ENCODE measurements at regions of chr1 and their contacts with region 1.

Region 1: DNA sequence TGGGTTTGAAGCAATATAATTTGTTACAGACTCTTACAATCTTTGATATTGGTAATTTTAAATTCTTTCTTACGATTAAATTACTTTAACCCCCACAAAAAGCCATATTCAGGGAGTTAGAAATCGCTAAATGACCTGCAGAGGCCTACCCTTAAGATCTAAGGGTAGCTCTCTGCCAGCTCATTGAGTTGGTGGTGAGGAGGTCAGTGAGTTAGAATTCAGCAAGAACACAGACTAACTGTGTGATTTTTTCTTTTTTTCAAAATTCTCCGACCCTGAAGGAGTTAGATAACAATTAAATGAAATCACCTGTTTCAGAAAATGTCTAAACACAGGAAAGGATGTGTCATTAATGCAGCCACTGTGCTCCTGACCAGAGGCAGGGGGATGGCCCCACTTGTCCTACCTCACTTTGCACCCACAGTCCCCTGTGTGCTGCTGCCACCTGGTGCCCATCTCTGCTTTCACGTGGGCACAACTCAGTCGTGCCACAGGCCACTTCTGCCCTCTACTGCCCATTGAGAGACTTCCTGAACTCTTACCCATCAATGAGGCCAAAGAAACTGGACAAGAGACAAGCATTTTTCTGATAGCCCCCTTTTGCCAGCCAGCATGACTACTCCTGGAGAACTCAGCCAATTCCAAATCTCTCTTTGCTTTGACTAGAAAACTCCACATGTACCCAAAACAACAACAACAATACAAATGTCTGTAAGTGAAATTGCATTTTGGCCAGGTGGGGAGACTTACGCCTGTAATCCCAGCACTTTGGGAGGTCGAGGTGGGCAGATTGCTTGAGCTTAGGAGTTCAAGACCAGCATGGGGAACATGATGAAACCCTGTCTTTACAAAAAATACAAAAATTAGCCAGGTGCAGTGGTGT is 8.4 kb downstream of the CFAP45 start:
- DNase-seq: peak; percentile 97
- ATAC-seq: peak; percentile 74
- H3K4me3 ChIP-seq: no peak overlapping the region
- H3K27ac ChIP-seq: peak overlapping the region; percentile 19; the same call in 1 of the 2 replicates
- H3K4me1 ChIP-seq: peaks cover 27% of the 10 kb centered on the region
- H3K27me3 ChIP-seq: no peaks in the 10 kb centered on the region
- CTCF ChIP-seq: peak; percentile 100

Region 2: DNA sequence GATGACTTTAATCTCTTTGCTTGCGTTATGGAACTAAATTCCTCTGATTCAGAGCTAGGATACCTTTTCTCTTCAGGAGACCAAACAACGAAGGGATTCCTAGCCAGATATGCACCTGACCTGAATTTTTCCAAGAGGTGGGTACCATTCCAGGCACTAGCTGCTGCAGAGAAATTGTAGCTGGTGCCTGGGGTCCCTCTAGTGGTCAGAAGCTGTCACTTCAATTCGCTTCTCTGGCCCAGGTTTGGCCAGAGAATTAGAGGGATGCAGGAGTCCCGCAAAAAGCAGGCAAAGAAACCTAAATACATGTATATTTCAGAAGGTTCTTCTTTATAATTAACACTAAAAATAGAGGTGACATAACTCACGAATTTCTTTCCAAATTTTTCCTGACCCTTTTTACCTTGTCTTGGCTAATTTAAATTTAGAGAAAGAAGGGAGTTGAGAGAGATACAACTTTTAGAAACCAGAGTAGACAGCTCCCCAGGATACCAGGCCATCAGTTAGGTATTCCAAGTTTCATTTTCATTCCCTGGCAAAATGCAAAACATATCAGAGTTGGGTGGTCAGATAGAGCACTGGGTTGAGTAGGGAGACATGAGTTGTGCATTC is 677.3 kb before region 1 on chr1:
- CTCF ChIA-PET with region 1: no interaction called
- POLR2A ChIA-PET with region 1: no interaction called
- intact Hi-C with region 1: loop called (anchors 5 kb)
- DNase-seq: peak; percentile 72
- ATAC-seq: peak; percentile 74
- H3K4me3 ChIP-seq: no peak overlapping the region
- H3K27ac ChIP-seq: no peak overlapping the region
- H3K4me1 ChIP-seq: peaks cover 4% of the 10 kb centered on the region; the same call in 1 of the 2 replicates
- H3K27me3 ChIP-seq: peaks cover 29% of the 10 kb centered on the region
- CTCF ChIP-seq: peak; percentile 92

Region 3: DNA sequence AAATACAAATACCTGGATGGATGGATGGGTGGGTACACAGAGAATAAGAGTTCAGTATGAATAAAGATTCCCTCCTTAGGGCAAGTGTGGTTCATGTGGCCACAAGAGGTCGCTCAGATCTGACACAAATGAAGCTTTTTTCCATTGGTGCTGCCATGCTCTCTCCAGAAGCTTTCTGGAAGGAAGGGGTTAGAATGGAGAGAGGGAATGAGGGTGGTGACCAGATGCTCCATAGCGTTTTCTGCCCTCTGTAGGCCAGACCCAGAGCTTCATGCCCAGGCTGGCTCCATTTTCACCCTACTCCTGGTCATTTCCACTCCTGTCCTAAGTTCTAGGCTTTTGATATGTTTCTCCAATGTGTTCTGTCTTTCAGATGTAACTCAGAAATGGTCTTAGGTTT is 92.6 kb before region 1 on chr1:
- CTCF ChIA-PET with region 1: interaction called, 105 read pairs
- POLR2A ChIA-PET with region 1: no interaction called
- intact Hi-C with region 1: loop called (anchors 1 kb)
- DNase-seq: peak; percentile 92
- ATAC-seq: peak; percentile 94
- H3K4me3 ChIP-seq: no peak overlapping the region
- H3K27ac ChIP-seq: no peak overlapping the region
- H3K4me1 ChIP-seq: peaks cover 3% of the 10 kb centered on the region; the same call in 1 of the 2 replicates
- H3K27me3 ChIP-seq: peaks cover 33% of the 10 kb centered on the region
- CTCF ChIP-seq: peak; percentile 98

Region 4: GRCh38 chr1:159854693-159855192 is 36.8 kb before region 1 on chr1:
- CTCF ChIA-PET with region 1: interaction called, 7 read pairs
- POLR2A ChIA-PET with region 1: no interaction called
- intact Hi-C with region 1: loop called (anchors 2 kb)
- DNase-seq: peak; percentile 85
- ATAC-seq: peak; percentile 83
- H3K4me3 ChIP-seq: peak overlapping the region; percentile 84
- H3K27ac ChIP-seq: peak overlapping the region; percentile 73
- H3K4me1 ChIP-seq: peaks cover 25% of the 10 kb centered on the region
- H3K27me3 ChIP-seq: no peaks in the 10 kb centered on the region
- CTCF ChIP-seq: no peak

Region 5: DNA sequence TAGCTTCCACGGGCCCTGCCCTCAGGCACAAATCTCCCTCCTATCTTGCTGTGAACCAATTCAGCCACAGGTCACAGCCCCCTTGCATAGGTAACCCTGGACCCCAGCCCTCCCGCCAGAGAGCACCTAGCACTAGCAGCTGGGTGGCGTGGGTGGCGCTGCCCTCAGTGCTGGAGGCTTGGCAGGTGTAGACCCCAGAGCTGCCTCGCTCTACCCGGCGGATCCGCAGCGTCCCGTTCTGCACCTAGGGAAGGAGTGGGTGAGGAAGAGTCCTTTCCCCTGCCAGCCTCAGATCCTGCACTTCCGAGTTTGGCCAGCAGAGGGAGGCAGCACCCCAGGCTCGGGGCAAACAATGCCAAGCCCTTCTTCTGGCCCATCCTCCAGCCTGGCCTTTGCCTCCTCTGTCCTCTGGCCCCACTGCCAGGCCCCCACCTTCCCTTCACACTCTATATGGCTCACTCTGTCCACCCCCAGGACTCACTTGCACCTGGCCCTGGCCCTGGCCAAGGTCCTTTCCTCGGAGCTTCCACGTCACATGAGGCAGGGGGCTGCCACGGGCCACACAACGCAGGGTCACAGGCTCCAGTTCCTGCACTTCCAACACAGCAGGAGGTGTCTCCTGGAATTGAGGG is 44.9 kb after region 1 on chr1:
- CTCF ChIA-PET with region 1: interaction called, 5 read pairs
- POLR2A ChIA-PET with region 1: no interaction called
- intact Hi-C with region 1: loop called (anchors 2 kb)
- DNase-seq: peak; percentile 93
- ATAC-seq: peak; percentile 59
- H3K4me3 ChIP-seq: no peak overlapping the region
- H3K27ac ChIP-seq: peak overlapping the region; percentile 51
- H3K4me1 ChIP-seq: peaks cover 36% of the 10 kb centered on the region
- H3K27me3 ChIP-seq: no peaks in the 10 kb centered on the region
- CTCF ChIP-seq: peak; percentile 94

Region 6: GRCh38 chr1:160006312-160006940 is 114.9 kb after region 1 on chr1:
- CTCF ChIA-PET with region 1: interaction called, 144 read pairs
- POLR2A ChIA-PET with region 1: no interaction called
- intact Hi-C with region 1: loop called (anchors 1 kb)
- DNase-seq: peak; percentile 89
- ATAC-seq: peak; percentile 94
- H3K4me3 ChIP-seq: no peak overlapping the region
- H3K27ac ChIP-seq: no peak overlapping the region
- H3K4me1 ChIP-seq: no peaks in the 10 kb centered on the region; the same call in 1 of the 2 replicates
- H3K27me3 ChIP-seq: no peaks in the 10 kb centered on the region
- CTCF ChIP-seq: peak; percentile 97

Region 7: GRCh38 chr1:160046494-160047110 is 155.1 kb after region 1 on chr1:
- CTCF ChIA-PET with region 1: no interaction called
- POLR2A ChIA-PET with region 1: no interaction called
- intact Hi-C with region 1: no loop called
- DNase-seq: peak; percentile 58
- ATAC-seq: peak; percentile 84
- H3K4me3 ChIP-seq: no peak overlapping the region
- H3K27ac ChIP-seq: no peak overlapping the region
- H3K4me1 ChIP-seq: no peaks in the 10 kb centered on the region
- H3K27me3 ChIP-seq: peaks cover 40% of the 10 kb centered on the region
- CTCF ChIP-seq: peak; percentile 90